Aorta (tissue), 5 donors: ENCODE measurements at regions of chr6 and their contacts with region 1.

Region 1: GRCh38 chr6:22828179-22829062 is 259.1 kb downstream of the HDGFL1 start:
- DNase-seq: no peak
- ATAC-seq: peak; percentile 81
- H3K4me3 ChIP-seq: peak overlapping the region in 1 of 2 donors; percentile 6
- H3K27ac ChIP-seq: peak overlapping the region; percentile 89 to 96
- H3K4me1 ChIP-seq: peaks cover 0 to 3% of the 10 kb centered on the region in 2 donors
- H3K27me3 ChIP-seq: no peaks in the 10 kb centered on the region

Region 2: GRCh38 chr6:22880686-22881433 is 52.4 kb after region 1 on chr6:
- intact Hi-C with region 1: loop called in 1 of 2 experiments (anchors 10 kb)
- DNase-seq: no peak
- ATAC-seq: peak; percentile 68
- H3K4me3 ChIP-seq: no peak overlapping the region
- H3K27ac ChIP-seq: peak overlapping the region in 1 of 2 donors; percentile 7
- H3K4me1 ChIP-seq: peaks cover 0 to 1% of the 10 kb centered on the region in 2 donors
- H3K27me3 ChIP-seq: no peaks in the 10 kb centered on the region